Activated B cell treated with CpG ODN at 0.5 μM for 24 hours (primary cell): ENCODE measurements at regions of chr22 and their contacts with region 1.

Region 1: DNA sequence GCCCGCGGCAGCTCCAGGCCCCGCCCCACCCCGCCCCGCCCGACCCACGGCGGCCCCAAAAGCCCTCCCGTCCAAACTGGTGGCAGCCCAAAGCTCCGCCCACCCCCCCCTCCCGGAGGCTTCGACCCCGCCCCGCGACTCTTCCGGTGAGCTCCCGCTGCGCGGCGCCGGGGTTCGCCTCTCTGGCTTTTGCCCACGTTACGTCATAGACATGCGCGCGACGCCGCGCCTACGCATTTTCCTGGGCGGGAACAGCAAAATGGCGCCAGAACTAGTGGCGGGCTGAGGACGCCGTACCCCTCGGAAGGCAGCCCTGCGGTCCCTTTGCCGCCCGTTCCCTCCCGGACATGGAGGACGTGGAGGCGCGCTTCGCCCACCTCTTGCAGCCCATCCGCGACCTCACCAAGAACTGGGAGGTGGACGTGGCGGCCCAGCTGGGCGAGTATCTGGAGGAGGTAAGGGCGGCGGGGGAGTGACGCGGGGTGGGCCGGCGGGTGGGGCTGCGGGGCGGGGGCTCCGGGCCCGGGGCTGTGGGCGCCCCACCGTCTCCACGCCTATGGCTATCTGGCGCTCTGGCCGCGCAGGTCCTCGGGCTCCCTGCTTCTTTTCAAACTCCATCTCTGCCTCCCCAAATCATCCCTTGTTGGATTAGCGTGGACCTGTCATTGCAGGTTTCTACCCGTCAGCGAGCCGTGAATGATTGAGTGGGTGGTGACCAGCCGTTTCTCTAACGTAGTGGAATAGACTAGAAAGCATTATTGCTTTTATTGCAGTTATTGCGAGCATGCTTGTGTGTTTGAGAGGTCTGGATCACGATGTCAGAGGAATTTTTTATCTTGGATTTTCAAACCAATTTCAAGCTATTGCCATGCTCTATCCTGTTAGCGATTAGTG is at the start of gene NCAPH2:
- DNase-seq: peak; percentile 96
- ATAC-seq: peak; percentile 74
- H3K4me3 Mint-ChIP-seq: peak within 1 kb of the TSS; percentile 94
- H3K27ac Mint-ChIP-seq: peak within 1 kb of the TSS; percentile 94
- H3K4me1 Mint-ChIP-seq: peaks cover 20% of the 10 kb centered on the region
- H3K27me3 Mint-ChIP-seq: no peaks in the 10 kb centered on the region
- CTCF ChIP-seq: no peak
- total RNA-seq, gene NCAPH2: 63.9 and 68.2 TPM in 2 replicates

Region 2: GRCh38 chr22:50469377-50470305 is 38.6 kb before region 1 on chr22:
- CTCF ChIA-PET with region 1: no interaction called
- POLR2A ChIA-PET with region 1: interaction called, 15 read pairs
- intact Hi-C with region 1: loop called (anchors 1 kb)
- DNase-seq: peak; percentile 84
- ATAC-seq: peak; percentile 81
- H3K4me3 Mint-ChIP-seq: peak overlapping the region; percentile 68
- H3K27ac Mint-ChIP-seq: peak overlapping the region; percentile 88
- H3K4me1 Mint-ChIP-seq: peaks cover 69% of the 10 kb centered on the region
- H3K27me3 Mint-ChIP-seq: no peaks in the 10 kb centered on the region
- CTCF ChIP-seq: no peak

Region 3: DNA sequence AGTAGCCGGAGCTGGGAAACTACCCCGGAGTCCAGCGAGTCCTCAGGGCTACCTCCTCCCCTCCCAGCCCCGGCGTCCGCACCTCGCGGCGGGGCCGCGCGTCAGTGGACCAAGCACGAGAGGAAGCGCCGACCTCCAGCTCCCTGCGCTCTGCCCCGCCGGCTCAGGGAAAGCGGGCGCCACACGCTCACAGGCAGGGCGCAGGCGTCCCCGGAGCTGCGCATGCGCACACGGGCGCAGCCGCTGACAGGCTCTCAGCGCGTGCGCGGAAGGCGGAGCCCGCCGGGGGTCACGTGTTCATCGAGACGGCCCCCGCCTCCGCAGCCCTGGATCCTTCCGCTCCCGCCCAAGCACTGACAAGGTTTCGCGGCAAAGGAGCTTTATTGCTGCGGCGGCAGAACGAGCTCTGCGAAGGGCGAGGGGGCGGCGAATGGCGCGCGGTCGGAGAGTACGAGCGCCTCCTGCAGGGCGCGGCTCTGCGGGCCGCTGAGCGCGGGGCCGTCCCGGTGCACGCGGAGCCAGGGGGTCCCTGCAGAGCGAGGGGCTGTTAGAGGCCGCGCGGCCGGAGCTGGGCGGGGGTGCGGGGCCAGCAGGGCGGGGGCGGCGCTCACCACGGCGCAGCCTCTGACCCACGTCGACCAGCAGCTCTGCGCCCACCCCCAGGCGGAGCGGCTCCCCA is 17.3 kb after region 1 on chr22 and contains the start of gene SCO2:
- CTCF ChIA-PET with region 1: interaction called, 36 read pairs
- POLR2A ChIA-PET with region 1: interaction called, 175 read pairs
- intact Hi-C with region 1: loop called (anchors 1 kb)
- DNase-seq: peak; percentile 97
- ATAC-seq: peak; percentile 52
- H3K4me3 Mint-ChIP-seq: peak within 1 kb of the TSS; percentile 84
- H3K27ac Mint-ChIP-seq: peak within 1 kb of the TSS; percentile 90
- H3K4me1 Mint-ChIP-seq: peaks cover 33% of the 10 kb centered on the region
- H3K27me3 Mint-ChIP-seq: no peaks in the 10 kb centered on the region
- CTCF ChIP-seq: no peak
- total RNA-seq, gene SCO2: 7.1 and 11.6 TPM in 2 replicates

Region 4: DNA sequence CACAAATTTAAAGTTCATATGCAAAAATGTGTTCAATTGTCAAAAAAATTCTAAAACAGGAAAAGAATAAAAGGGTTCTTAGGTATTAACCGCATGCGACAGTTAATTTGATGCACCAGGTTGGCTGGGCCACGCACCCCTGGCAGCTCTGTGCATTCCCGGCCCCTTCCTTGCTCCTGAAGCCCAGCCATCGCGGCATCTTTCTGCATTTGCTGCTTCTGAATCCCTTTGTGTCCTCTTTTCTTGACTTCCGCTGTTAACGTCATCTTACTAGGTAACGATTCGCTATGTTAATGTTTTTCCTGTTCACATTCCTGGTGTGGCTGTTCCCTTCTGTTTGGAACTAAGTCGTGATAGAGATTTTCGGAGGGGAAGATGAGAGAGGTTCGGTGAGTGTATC is 29.5 kb after region 1 on chr22:
- CTCF ChIA-PET with region 1: no interaction called
- POLR2A ChIA-PET with region 1: interaction called, 33 read pairs
- intact Hi-C with region 1: loop called (anchors 1 kb)
- DNase-seq: no peak
- ATAC-seq: no peak
- H3K4me3 Mint-ChIP-seq: peak overlapping the region; percentile 13
- H3K27ac Mint-ChIP-seq: peak overlapping the region; percentile 91
- H3K4me1 Mint-ChIP-seq: peaks cover 82% of the 10 kb centered on the region
- H3K27me3 Mint-ChIP-seq: no peaks in the 10 kb centered on the region
- CTCF ChIP-seq: no peak

Region 5: DNA sequence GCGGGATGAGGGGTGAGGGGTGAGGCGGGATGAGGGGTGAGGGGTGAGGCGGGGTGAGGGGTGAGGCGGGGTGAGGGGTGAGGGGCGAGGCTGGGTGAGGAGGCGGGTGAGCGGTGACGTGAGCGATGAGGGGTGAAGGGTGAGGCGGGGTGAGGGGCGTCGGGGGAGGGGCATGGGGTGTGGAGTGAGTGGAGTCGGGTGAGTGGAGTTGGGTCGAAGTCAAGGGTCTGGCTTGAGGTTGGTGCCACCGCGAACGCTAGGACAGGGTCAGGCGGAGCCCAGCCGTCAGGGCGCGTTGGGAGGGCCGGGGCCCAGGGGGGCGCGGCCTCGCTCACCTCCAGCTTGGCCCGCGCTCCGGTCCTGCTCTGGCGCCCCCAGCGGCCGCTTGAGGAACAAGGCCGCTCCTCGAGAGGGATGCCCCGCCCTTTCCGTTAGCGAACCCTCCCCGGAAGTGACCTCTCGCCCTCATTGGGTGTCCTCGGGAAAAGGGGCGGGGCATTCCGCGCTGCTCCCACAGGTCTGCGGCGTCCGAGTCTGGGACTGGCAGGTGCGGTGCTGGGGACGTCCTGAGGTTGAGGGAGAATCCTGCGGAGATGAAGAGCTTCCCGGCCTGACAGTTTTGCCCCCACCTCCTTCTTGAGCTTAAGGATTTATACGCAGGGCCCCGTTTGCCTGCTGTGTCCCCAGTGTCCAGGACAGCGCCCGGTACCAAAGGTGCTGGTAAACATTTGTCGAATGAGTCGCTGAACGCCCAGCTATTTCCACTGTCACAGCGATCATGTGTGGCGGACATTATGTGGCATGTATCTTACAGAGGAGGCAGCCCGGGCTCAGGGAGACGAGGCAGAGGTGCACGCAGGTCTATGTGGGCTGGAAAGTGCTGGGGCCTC is 54.5 kb after region 1 on chr22 and contains the start of gene SYCE3:
- CTCF ChIA-PET with region 1: no interaction called
- POLR2A ChIA-PET with region 1: interaction called, 8 read pairs
- intact Hi-C with region 1: loop called (anchors 1 kb)
- DNase-seq: peak; percentile 97
- ATAC-seq: peak; percentile 98
- H3K4me3 Mint-ChIP-seq: peak within 1 kb of the TSS; percentile 95
- H3K27ac Mint-ChIP-seq: peak within 1 kb of the TSS; percentile 81
- H3K4me1 Mint-ChIP-seq: peaks cover 15% of the 10 kb centered on the region
- H3K27me3 Mint-ChIP-seq: peaks cover 1% of the 10 kb centered on the region
- CTCF ChIP-seq: peak; percentile 38
- total RNA-seq, gene SYCE3: not detected in 2 replicates